Left colon (tissue), 2 donors: ENCODE measurements at regions of chr22 and their contacts with region 1.

Region 1: GRCh38 chr22:42462016-42462415 is 29.8 kb upstream of the NFAM1 start:
- DNase-seq: no peak
- ATAC-seq: no peak

Region 2: GRCh38 chr22:41976401-41976901 is 485.6 kb before region 1 on chr22:
- intact Hi-C with region 1: loop called in 1 of 2 experiments (anchors 10 kb)
- DNase-seq: peak in 1 of 2 donors; percentile 59
- ATAC-seq: peak; percentile 94